H1 (cell line): ENCODE measurements at regions of chr7 and their contacts with region 1.

Region 1: GRCh38 chr7:128681794-128682537 is 9.9 kb downstream of the GARIN1A start:
- DNase-seq: no peak
- H3K4me3 ChIP-seq: no peak overlapping the region
- H3K27ac ChIP-seq: no peak overlapping the region
- H3K4me1 ChIP-seq: no peaks in the 10 kb centered on the region
- H3K27me3 ChIP-seq: no peaks in the 10 kb centered on the region
- CTCF ChIP-seq: no peak
- EP300 ChIP-seq: no peak
- POLR2A ChIP-seq: no peak
- RAD21 ChIP-seq: no peak

Region 2: GRCh38 chr7:128666200-128666599 is 15.8 kb before region 1 on chr7:
- CTCF ChIA-PET with region 1: interaction called, 53 read pairs
- POLR2A ChIA-PET with region 1: interaction called, 3 read pairs
- DNase-seq: no peak
- H3K4me3 ChIP-seq: no peak overlapping the region
- H3K27ac ChIP-seq: no peak overlapping the region
- H3K4me1 ChIP-seq: no peaks in the 10 kb centered on the region
- H3K27me3 ChIP-seq: no peaks in the 10 kb centered on the region
- CTCF ChIP-seq: peak in 1 of 3 experiments; percentile 39; a peak in 2 of 4 replicates
- EP300 ChIP-seq: no peak
- POLR2A ChIP-seq: no peak
- RAD21 ChIP-seq: peak; percentile 18 to 29; a peak in 3 of 4 replicates

Region 3: DNA sequence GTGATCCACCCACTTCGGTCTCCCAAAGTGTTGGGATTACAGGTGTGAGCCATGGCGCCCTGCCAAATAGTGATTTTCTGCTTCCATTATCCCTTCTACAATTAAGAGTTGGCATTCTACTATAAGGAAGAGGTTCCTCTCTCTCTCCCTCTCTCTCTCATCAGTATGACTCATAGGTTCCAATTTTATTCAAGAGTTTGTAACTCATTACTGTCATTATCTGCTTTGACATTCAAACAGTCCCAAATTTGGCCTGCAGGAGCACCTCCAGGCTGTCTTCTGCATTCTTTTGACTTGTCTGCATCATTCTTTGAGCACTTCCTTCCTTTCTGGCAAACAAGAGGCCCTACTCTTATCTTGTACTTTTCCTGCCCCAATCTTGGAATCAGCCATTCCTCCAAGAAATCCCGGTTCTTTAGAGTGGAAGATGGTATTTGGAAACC is 23.9 kb after region 1 on chr7:
- CTCF ChIA-PET with region 1: no interaction called
- POLR2A ChIA-PET with region 1: no interaction called
- DNase-seq: no peak
- H3K4me3 ChIP-seq: no peak overlapping the region
- H3K27ac ChIP-seq: no peak overlapping the region
- H3K4me1 ChIP-seq: peaks cover 2 to 10% (median 7%) of the 10 kb centered on the region in 4 experiments; a peak in 6 of 7 replicates
- H3K27me3 ChIP-seq: no peaks in the 10 kb centered on the region
- CTCF ChIP-seq: no peak
- EP300 ChIP-seq: no peak
- POLR2A ChIP-seq: no peak
- RAD21 ChIP-seq: no peak